ENCODE measurements at regions of chr12 and their contacts with region 1.

Region 1: DNA sequence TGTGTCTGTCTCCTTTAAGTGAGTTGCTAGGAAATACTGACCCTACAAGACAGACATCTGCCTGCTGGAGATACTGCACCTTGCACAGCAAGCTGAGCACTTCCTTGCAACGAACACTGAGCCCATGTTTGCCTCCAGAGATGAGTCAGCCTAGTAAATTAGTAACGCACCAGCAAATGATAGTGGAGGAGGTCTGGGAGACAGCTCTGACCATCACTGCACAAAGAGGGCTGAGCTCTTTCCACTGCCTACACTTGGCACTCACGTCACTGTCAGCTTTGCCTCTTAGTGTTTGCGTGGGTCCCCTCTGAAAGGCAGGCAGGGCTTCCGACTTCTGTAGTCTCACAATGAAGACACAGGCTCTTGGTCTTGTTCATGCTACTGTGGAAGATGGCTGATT is 109.0 kb downstream of the APAF1 start:
- DNase-seq: peak; percentile 94
- ATAC-seq: peak; percentile 96
- H3K4me3 ChIP-seq: no peak overlapping the region
- H3K27ac ChIP-seq: peak overlapping the region; percentile 95
- H3K4me1 ChIP-seq: peaks cover 36% of the 10 kb centered on the region
- H3K27me3 ChIP-seq: no peaks in the 10 kb centered on the region
- CTCF ChIP-seq: no peak

Region 2: DNA sequence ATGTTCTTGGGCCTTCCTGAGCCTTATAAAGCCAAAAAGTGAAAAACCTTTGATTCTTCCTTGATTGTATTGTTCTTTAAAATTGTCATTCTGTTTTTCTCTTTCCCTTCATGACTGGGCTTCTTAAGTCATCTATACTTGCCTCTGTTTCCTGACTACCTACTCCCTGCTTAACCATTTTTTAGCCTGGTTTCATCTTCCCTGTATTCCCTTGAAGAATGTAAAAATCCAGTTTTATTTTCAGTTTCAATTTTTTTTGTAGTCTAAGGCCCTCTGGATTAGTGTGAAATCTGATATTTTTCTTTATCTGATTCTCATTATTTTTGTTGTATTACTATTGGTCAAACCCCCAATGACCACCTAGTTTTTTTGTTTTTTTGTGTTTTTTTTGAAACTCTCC is 62.7 kb before region 1 on chr12:
- CTCF ChIA-PET with region 1: no interaction called
- POLR2A ChIA-PET with region 1: no interaction called
- intact Hi-C with region 1: loop called (anchors 5 kb)
- DNase-seq: no peak
- ATAC-seq: no peak
- H3K4me3 ChIP-seq: no peak overlapping the region
- H3K27ac ChIP-seq: no peak overlapping the region
- H3K4me1 ChIP-seq: no peaks in the 10 kb centered on the region
- H3K27me3 ChIP-seq: no peaks in the 10 kb centered on the region
- CTCF ChIP-seq: no peak

Region 3: DNA sequence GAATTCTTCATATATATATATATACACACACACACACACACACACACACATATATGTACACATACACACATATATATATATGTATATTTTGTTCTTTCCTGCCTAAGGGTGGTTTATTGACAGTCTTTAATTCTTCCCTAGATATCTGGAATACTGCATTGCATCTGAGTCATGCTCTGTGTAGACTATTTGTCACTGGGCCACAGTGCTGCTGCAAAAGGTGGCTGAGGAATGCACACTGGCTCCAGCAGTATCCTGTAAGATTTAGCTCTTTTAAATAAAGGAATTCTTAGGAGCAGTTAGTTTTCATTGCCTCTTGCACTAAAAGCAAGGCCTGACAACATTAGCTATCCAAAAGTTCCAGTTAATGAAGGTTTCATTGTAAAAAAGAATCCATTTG is 91.9 kb after region 1 on chr12:
- CTCF ChIA-PET with region 1: no interaction called
- POLR2A ChIA-PET with region 1: no interaction called
- intact Hi-C with region 1: no loop called
- DNase-seq: peak; percentile 48
- ATAC-seq: peak; percentile 89
- H3K4me3 ChIP-seq: no peak overlapping the region
- H3K27ac ChIP-seq: no peak overlapping the region
- H3K4me1 ChIP-seq: no peaks in the 10 kb centered on the region
- H3K27me3 ChIP-seq: peaks cover 30% of the 10 kb centered on the region
- CTCF ChIP-seq: no peak

Measured in PC-3 (cell line).